Activated T-helper 1 cell treated with anti-CD3 and anti-CD28 coated beads, Interleukin-12 subunit alpha, Interleukin-12 subunit beta, Interleukin-2, Interleukin-4 antibody, amounts not matched to agents 30 ng/mL and 10 ng/mL and 1 ng/mL, durations not matched to agents 14 hours and 24 hours and 36 hours (primary cell): ENCODE measurements at regions of chr7 and their contacts with region 1.

Region 1: GRCh38 chr7:37352974-37353948 is 95.4 kb downstream of the ELMO1 start:
- DNase-seq: peak; percentile 71
- H3K4me3 Mint-ChIP-seq: peak overlapping the region; percentile 93
- H3K27ac Mint-ChIP-seq: peak overlapping the region; percentile 97
- H3K4me1 Mint-ChIP-seq: peaks cover 90% of the 10 kb centered on the region
- H3K27me3 Mint-ChIP-seq: no peaks in the 10 kb centered on the region

Region 2: GRCh38 chr7:36389371-36390198 is 963.7 kb before region 1 on chr7 and contains the start of gene ANLN:
- intact Hi-C with region 1: loop called (anchors 1 kb)
- DNase-seq: peak; percentile 84
- H3K4me3 Mint-ChIP-seq: peak within 1 kb of the TSS; percentile 86
- H3K27ac Mint-ChIP-seq: peak within 1 kb of the TSS; percentile 78
- H3K4me1 Mint-ChIP-seq: peaks cover 37% of the 10 kb centered on the region
- H3K27me3 Mint-ChIP-seq: peaks cover 12% of the 10 kb centered on the region
- total RNA-seq, gene ANLN: 23.8 and 31.0 TPM in 2 replicates

Region 3: DNA sequence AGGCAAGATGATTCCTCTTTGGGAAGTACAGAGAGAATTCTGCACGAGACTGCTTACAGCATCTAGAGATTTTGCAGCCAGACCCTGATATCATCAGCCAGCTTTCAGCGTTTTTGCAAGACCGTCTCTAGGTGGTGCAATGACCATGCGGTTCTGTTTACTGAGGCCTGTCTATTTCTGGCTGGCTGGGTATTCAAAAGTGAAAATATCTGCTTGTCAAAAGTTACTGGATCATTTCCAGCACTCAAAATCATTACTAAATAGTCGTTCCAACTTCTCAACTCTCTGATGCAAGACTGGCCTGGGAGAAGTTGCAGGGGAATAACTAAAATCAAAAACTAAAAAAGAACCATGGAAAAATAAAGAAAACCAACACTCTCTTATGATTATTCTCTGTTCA is 144.7 kb before region 1 on chr7:
- intact Hi-C with region 1: loop called (anchors 1 kb)
- DNase-seq: no peak
- H3K4me3 Mint-ChIP-seq: no peak overlapping the region
- H3K27ac Mint-ChIP-seq: no peak overlapping the region
- H3K4me1 Mint-ChIP-seq: peaks cover 15% of the 10 kb centered on the region
- H3K27me3 Mint-ChIP-seq: no peaks in the 10 kb centered on the region

Region 4: GRCh38 chr7:37311355-37311754 is 41.9 kb before region 1 on chr7:
- intact Hi-C with region 1: loop called (anchors 1 kb)
- DNase-seq: no peak
- H3K4me3 Mint-ChIP-seq: peak overlapping the region; percentile 9
- H3K27ac Mint-ChIP-seq: peak overlapping the region; percentile 87
- H3K4me1 Mint-ChIP-seq: peaks cover 54% of the 10 kb centered on the region
- H3K27me3 Mint-ChIP-seq: no peaks in the 10 kb centered on the region

Region 5: DNA sequence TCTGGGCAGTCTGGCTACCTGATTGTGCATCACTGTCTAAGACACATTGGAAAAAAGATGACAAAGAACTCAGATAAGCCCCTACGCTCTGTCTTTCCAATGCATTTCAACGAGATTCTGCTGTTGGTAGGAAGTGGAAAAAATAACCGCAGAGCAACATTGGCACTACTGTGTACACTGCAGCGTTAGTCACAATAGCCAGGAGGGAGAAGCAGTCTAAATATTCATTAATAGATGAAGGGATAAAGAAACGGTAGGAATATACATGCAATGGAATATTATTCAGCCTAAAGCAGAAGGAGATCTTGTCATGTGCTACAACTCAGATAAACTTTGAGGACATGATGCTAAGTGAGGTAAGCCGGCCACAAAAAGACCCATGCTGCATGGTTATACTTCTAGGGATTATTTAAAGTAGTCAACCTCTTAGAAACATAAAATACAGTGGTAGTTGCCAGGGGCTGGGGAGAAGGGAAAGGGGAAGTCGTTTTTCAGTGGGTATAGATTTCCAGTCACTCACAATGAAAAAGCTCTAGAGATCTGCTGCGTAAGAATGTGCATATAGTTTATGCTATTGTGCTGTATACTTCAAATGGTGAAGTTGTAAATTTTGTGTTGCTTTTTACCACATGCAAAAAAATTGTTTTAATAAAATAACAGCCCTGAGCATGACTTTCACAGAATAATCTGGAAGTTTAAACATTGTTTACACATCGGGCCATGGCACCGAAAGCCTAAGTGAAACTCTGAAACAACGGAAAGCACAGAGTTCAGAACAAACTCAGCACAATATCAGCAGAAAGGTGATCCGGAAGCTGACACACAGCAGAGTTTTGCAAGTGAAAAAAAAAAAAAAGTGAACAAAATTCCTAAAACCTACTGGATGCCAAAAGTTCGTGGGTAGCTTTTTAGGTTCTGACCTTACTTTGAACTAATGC is 55.3 kb after region 1 on chr7:
- intact Hi-C with region 1: loop called (anchors 1 kb)
- DNase-seq: no peak
- H3K4me3 Mint-ChIP-seq: peak overlapping the region; percentile 83
- H3K27ac Mint-ChIP-seq: peak overlapping the region; percentile 96
- H3K4me1 Mint-ChIP-seq: peaks cover 78% of the 10 kb centered on the region
- H3K27me3 Mint-ChIP-seq: no peaks in the 10 kb centered on the region

Region 6: GRCh38 chr7:37510043-37510634 is 156.9 kb after region 1 on chr7:
- intact Hi-C with region 1: loop called (anchors 1 kb)
- DNase-seq: no peak
- H3K4me3 Mint-ChIP-seq: no peak overlapping the region
- H3K27ac Mint-ChIP-seq: no peak overlapping the region
- H3K4me1 Mint-ChIP-seq: no peaks in the 10 kb centered on the region
- H3K27me3 Mint-ChIP-seq: peaks cover 19% of the 10 kb centered on the region

Region 7: GRCh38 chr7:37656913-37657530 is 303.8 kb after region 1 on chr7:
- intact Hi-C with region 1: no loop called
- DNase-seq: no peak
- H3K4me3 Mint-ChIP-seq: no peak overlapping the region
- H3K27ac Mint-ChIP-seq: no peak overlapping the region
- H3K4me1 Mint-ChIP-seq: no peaks in the 10 kb centered on the region
- H3K27me3 Mint-ChIP-seq: no peaks in the 10 kb centered on the region